BJ (cell line): ENCODE measurements at regions of chr2 and their contacts with region 1.

Region 1: DNA sequence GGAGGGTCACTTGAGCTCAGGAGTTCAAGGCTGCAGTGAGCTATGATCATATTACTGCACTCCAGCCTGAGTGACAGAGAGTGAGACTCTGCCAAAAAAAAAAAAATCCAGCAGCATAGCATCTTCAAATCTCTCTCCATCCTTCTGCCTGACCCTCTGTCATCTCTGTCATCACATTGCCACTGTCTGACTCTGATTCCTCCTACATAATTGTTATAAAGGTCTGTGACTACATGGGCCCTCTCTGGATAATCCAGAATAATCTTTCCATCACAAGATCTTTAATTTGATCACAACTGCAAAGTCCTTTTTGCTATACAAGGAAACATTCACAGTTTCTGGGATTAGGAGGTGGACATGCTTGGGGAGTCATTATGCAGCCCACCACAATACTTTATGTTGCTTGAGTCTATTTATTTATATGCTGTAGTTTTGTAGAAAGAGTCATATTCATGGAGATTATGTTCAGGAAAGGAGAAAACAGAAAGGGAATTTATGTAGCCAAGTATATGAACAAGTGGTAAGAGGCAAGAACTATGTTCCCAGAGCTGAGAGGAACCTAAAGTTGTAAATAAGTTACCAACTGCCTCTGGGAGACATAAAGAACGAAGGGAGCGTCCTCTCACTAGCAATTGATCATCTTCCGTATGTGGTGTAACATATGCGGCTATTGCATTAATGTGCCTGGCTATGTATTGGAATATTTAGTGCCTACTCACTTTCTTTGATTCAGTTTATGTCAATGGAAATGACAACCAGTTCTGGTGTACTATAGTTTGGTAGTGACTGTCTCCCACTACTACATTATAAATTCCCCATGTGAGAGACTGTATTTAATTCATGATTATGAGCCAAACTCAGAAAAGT is 21.5 kb downstream of the RND3 start:
- DNase-seq: no peak
- H3K4me3 ChIP-seq: no peak overlapping the region
- H3K27me3 ChIP-seq: no peaks in the 10 kb centered on the region
- CTCF ChIP-seq: no peak

Region 2: DNA sequence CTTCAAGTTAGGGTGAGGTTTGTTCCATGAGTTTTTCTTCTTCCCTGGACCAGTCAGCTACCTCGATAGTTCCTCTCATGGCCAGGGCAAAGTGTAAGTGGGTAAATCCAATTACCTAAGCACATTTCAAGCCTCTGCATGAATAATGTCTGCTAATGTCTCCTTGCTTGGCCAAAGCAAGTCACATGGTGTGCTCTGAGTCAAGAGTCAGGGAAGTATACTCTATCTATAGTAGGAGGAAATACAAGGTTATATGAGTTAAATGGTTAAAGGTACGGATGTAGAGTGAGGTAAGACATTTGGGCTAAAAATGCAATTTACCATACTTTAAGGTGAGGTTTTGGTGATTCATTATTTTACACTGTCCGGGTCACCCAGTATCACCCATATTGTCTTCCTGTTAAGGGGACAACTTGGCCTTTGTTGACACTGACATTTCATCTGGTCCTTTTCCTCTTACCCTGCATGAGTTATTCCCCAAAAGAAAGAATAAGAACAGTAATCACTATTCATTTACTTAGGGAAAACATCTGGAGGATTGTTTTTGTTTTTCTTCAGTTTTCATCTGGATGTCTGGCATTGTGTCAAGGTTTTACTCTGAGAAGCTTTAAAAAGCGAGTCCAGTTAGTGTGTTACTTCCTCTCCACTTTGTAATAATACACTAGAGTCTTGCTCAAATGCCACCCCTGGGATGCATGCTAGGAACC is 384.0 kb before region 1 on chr2:
- CTCF ChIA-PET with region 1: no interaction called
- POLR2A ChIA-PET with region 1: interaction called, 12 read pairs
- DNase-seq: no peak
- H3K4me3 ChIP-seq: no peak overlapping the region
- H3K27me3 ChIP-seq: no peaks in the 10 kb centered on the region
- CTCF ChIP-seq: no peak

Region 3: GRCh38 chr2:150674283-150674682 is 208.3 kb after region 1 on chr2:
- CTCF ChIA-PET with region 1: no interaction called
- POLR2A ChIA-PET with region 1: no interaction called
- DNase-seq: no peak
- H3K4me3 ChIP-seq: no peak overlapping the region
- H3K27me3 ChIP-seq: no peaks in the 10 kb centered on the region
- CTCF ChIP-seq: no peak